Activated CD8-positive, alpha-beta T cell treated with anti-CD3 and anti-CD28 coated beads for 36 hours (primary cell): ENCODE measurements at regions of chr7 and their contacts with region 1.

Region 1: GRCh38 chr7:121107923-121108498 is 119.5 kb downstream of the CPED1 start:
- DNase-seq: no peak
- ATAC-seq: peak; percentile 82
- H3K4me3 Mint-ChIP-seq: no peak overlapping the region
- H3K27ac Mint-ChIP-seq: no peak overlapping the region
- H3K4me1 Mint-ChIP-seq: no peaks in the 10 kb centered on the region
- H3K27me3 Mint-ChIP-seq: peaks cover 6% of the 10 kb centered on the region
- CTCF ChIP-seq: peak; percentile 75

Region 2: DNA sequence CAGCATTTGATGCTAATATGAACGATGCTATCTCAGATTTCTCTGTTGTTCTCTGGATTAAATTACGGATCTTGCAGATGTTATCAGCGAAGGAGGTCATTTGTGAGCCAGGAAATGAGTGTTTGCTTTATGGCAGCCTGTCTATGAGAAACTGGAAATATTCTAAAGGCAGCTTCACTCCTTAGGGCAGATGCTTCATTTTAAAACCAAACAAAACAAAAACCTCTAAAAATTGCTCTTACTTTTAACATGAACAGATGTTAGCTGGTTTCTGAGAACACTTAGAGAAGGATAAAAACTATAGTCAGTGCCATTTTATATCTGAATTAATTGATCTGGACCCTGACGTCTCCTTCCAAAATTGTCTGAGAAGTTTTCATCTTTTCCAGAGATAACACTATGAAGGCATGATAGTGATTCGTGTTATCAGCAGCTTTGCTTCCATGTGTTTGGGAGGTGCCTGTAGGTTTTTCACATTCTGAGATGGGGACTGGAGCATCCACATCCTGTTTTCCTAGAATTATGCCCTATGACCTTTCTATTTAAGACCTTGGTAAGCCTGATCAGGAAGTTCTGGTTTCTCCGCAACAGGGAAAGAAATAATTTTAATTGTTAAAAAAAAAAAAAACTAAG is 66.4 kb before region 1 on chr7:
- CTCF ChIA-PET with region 1: no interaction called
- POLR2A ChIA-PET with region 1: no interaction called
- intact Hi-C with region 1: loop called (anchors 10 kb)
- DNase-seq: no peak
- ATAC-seq: no peak
- H3K4me3 Mint-ChIP-seq: no peak overlapping the region
- H3K27ac Mint-ChIP-seq: no peak overlapping the region
- H3K4me1 Mint-ChIP-seq: no peaks in the 10 kb centered on the region
- H3K27me3 Mint-ChIP-seq: peaks cover 4% of the 10 kb centered on the region
- CTCF ChIP-seq: no peak

Region 3: GRCh38 chr7:121094829-121095228 is 13.2 kb before region 1 on chr7:
- CTCF ChIA-PET with region 1: interaction called, 10 read pairs
- POLR2A ChIA-PET with region 1: no interaction called
- intact Hi-C with region 1: no loop called
- DNase-seq: no peak
- ATAC-seq: no peak
- H3K4me3 Mint-ChIP-seq: no peak overlapping the region
- H3K27ac Mint-ChIP-seq: no peak overlapping the region
- H3K4me1 Mint-ChIP-seq: no peaks in the 10 kb centered on the region
- H3K27me3 Mint-ChIP-seq: peaks cover 5% of the 10 kb centered on the region
- CTCF ChIP-seq: no peak

Region 4: GRCh38 chr7:121126201-121126600 is 18.2 kb after region 1 on chr7:
- CTCF ChIA-PET with region 1: no interaction called
- POLR2A ChIA-PET with region 1: no interaction called
- intact Hi-C with region 1: no loop called
- DNase-seq: no peak
- ATAC-seq: no peak
- H3K4me3 Mint-ChIP-seq: no peak overlapping the region
- H3K27ac Mint-ChIP-seq: no peak overlapping the region
- H3K4me1 Mint-ChIP-seq: no peaks in the 10 kb centered on the region
- H3K27me3 Mint-ChIP-seq: peaks cover 4% of the 10 kb centered on the region
- CTCF ChIP-seq: no peak

Region 5: DNA sequence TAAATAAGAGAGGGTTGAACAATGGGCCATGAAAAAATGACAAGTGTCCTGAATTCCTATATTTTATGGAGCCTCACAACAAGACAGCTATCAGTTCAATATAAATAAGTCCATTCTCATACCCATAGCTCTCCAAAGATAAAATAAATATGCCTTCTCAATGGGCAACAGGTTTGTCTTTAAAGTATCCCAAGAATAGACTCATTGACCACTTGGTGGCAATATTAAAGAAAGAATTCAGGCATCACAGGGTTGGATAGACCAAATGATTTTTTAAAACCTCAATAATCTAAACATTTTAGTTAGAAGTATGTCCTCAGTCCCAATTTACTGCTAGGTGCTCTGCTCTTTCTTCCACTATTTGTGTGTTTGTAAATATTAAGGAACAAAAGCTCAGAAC is 55.7 kb after region 1 on chr7:
- CTCF ChIA-PET with region 1: no interaction called
- POLR2A ChIA-PET with region 1: no interaction called
- intact Hi-C with region 1: no loop called
- DNase-seq: no peak
- ATAC-seq: no peak
- H3K4me3 Mint-ChIP-seq: no peak overlapping the region
- H3K27ac Mint-ChIP-seq: no peak overlapping the region
- H3K4me1 Mint-ChIP-seq: no peaks in the 10 kb centered on the region
- H3K27me3 Mint-ChIP-seq: peaks cover 6% of the 10 kb centered on the region
- CTCF ChIP-seq: no peak

Region 6: GRCh38 chr7:121410829-121411596 is 303.0 kb after region 1 on chr7:
- CTCF ChIA-PET with region 1: no interaction called
- POLR2A ChIA-PET with region 1: no interaction called
- intact Hi-C with region 1: no loop called
- DNase-seq: no peak
- ATAC-seq: peak; percentile 37
- H3K4me3 Mint-ChIP-seq: no peak overlapping the region
- H3K27ac Mint-ChIP-seq: no peak overlapping the region
- H3K4me1 Mint-ChIP-seq: peaks cover 7% of the 10 kb centered on the region
- H3K27me3 Mint-ChIP-seq: peaks cover 6% of the 10 kb centered on the region
- CTCF ChIP-seq: no peak